ENCODE measurements at regions of chr1 and their contacts with region 1.

Region 1: DNA sequence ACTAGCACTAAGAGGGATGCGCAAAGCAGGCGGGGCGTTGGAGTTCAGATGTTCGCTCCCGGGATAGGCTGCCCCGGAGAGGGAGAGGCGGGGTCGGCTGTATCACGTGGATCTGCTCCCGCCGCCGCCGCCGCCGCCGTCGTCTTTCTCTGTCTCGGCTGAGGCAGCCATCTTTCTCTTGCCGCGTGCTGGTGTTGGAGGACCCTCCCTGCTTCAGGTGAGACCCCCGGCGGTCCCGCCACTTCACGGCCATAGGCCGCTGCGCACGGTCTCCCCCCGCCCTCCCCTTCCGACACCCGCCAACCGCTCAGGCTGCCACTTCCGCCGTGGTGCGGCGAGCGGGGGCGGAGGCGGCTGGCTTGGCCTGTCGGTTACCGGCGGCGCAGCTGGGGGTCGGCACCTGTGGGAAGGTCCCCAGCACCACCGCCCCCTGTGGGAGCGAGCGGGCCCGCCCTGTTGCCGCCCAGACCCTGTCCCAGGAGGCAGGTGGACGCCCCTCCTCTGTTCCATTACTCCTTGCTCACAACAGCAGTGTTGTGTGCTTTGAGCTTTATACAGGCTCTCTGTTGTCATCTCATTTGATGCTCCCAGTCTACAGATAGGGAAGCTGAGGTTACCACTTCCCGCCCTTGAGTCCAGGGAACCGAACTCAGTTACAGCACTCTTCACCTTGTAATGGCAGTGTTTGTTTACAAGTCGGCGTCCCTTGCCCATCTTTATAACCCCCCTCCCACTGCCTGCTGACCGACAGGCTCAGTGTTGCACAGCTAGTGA is at the start of gene BTF3L4:
- DNase-seq: peak; percentile 74 to 94 (median 90)
- ATAC-seq: peak; percentile 97
- H3K4me3 ChIP-seq: peak within 1 kb of the TSS; percentile 92
- H3K4me3 Mint-ChIP-seq: peak within 1 kb of the TSS; percentile 93 to 100 (median 98)
- H3K27ac ChIP-seq: peak within 1 kb of the TSS; percentile 87
- H3K27ac Mint-ChIP-seq: peak within 1 kb of the TSS; percentile 91 to 99 (median 96)
- H3K4me1 ChIP-seq: peaks cover 19 to 24% of the 10 kb centered on the region in 2 donors
- H3K4me1 Mint-ChIP-seq: peaks cover 39 to 79% (median 65%) of the 10 kb centered on the region in 7 donors
- H3K27me3 ChIP-seq: no peaks in the 10 kb centered on the region
- H3K27me3 Mint-ChIP-seq: no peaks in the 10 kb centered on the region
- total RNA-seq, gene BTF3L4: 30.4 to 41.2 (median 35.8) TPM

Region 2: DNA sequence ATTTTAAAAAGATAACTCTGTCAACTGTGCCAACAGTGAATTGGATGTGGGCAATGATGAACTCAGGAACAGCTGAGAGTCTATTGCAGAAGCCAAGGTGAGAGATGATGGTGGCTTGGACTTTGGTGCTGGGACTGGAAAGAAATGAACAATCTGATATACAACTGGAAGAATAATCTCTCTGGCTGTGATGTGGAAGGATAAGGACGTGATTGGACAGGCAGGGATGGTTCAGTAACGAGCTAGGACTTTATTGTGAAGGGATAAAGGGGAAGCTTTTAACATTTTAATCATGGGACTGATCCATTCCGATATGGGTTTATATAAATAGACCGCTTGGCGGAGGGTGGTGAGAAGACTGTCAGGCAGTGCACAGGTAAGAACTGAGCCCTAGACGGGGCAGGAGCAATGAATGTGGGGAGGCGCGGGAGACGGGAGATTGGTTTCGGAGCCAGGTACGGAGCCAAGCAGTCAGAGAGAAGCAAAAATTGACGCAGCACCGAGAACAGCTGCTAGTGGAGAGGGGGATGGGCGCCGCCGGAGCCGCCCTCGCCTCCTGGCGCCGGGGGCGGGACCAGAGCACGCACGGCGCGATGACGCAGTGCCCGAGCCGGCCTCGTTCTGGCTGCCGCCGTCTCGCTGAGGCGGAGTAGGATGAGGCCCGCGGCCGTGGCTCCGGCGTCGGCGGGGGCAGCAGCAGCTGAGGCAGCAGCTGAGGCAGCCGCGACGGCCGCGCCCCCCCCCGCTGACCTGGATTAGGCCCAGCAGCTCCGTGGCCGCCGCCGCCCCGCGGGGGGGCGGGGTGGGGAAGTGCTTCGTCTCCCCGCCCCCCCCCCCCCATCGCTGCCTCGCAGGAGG is 820.4 kb before region 1 on chr1 and contains the start of gene RNF11:
- CTCF ChIA-PET with region 1: no interaction called
- POLR2A ChIA-PET with region 1: no interaction called
- intact Hi-C with region 1: loop called in 1 of 2 experiments (anchors 2 kb)
- DNase-seq: peak; percentile 89 to 97 (median 93)
- ATAC-seq: peak; percentile 98
- H3K4me3 ChIP-seq: peak within 1 kb of the TSS; percentile 68
- H3K4me3 Mint-ChIP-seq: peak within 1 kb of the TSS in 9 of 10 donors; percentile 90 to 99 (median 94)
- H3K27ac ChIP-seq: peak within 1 kb of the TSS; percentile 90
- H3K27ac Mint-ChIP-seq: peak within 1 kb of the TSS; percentile 91 to 100 (median 96)
- H3K4me1 ChIP-seq: peaks cover 18 to 34% of the 10 kb centered on the region in 2 donors
- H3K4me1 Mint-ChIP-seq: peaks cover 15 to 36% (median 30%) of the 10 kb centered on the region in 7 donors
- H3K27me3 ChIP-seq: no peaks in the 10 kb centered on the region
- H3K27me3 Mint-ChIP-seq: peaks cover 0 to 4% (median 0%) of the 10 kb centered on the region in 5 donors
- total RNA-seq, gene RNF11: 23.3 to 64.0 (median 42.9) TPM

Region 3: GRCh38 chr1:52033190-52034049 is 22.9 kb before region 1 on chr1 and contains the start of gene KTI12:
- CTCF ChIA-PET with region 1: no interaction called
- POLR2A ChIA-PET with region 1: interaction called, 43 read pairs
- intact Hi-C with region 1: loop called (anchors 1 kb)
- DNase-seq: peak; percentile 72 to 92 (median 89)
- ATAC-seq: peak; percentile 95
- H3K4me3 ChIP-seq: peak within 1 kb of the TSS; percentile 94
- H3K4me3 Mint-ChIP-seq: peak within 1 kb of the TSS; percentile 91 to 96 (median 93)
- H3K27ac ChIP-seq: peak within 1 kb of the TSS; percentile 73
- H3K27ac Mint-ChIP-seq: peak within 1 kb of the TSS; percentile 92 to 97 (median 96)
- H3K4me1 ChIP-seq: peaks cover 20 to 22% of the 10 kb centered on the region in 2 donors
- H3K4me1 Mint-ChIP-seq: peaks cover 18 to 52% (median 38%) of the 10 kb centered on the region in 7 donors
- H3K27me3 ChIP-seq: no peaks in the 10 kb centered on the region
- H3K27me3 Mint-ChIP-seq: no peaks in the 10 kb centered on the region
- total RNA-seq, gene KTI12: 14.5 to 23.5 (median 16.5) TPM

Region 4: DNA sequence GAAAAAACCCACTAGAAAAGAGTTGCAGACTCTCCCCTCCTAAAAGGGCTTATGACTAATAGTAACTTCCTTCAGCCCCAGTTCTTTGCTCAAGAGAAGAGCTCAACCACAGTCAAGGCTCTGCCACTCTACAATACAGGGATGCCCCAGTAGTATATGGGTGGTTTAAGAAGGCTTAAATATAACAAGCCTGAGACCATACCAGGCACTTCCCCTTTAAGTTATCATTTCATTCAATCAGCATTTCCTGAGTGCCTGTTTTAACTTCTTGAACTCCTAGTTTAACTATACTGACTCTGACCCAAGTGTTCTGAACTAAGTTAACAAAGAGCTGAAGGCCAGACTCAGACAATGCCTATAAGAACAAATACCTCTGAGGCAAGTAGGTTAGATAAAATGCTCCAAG is 367.9 kb after region 1 on chr1:
- CTCF ChIA-PET with region 1: no interaction called
- POLR2A ChIA-PET with region 1: no interaction called
- intact Hi-C with region 1: loop called (anchors 5 kb)
- DNase-seq: peak in 7 of 9 donors; percentile 38 to 71 (median 57)
- ATAC-seq: peak; percentile 93
- H3K4me3 ChIP-seq: peak overlapping the region; percentile 14
- H3K4me3 Mint-ChIP-seq: peak overlapping the region; percentile 49 to 81 (median 74)
- H3K27ac ChIP-seq: peak overlapping the region; percentile 63
- H3K27ac Mint-ChIP-seq: peak overlapping the region; percentile 85 to 96 (median 91)
- H3K4me1 ChIP-seq: peaks cover 35 to 45% of the 10 kb centered on the region in 2 donors
- H3K4me1 Mint-ChIP-seq: peaks cover 33 to 72% (median 51%) of the 10 kb centered on the region in 7 donors
- H3K27me3 ChIP-seq: no peaks in the 10 kb centered on the region
- H3K27me3 Mint-ChIP-seq: no peaks in the 10 kb centered on the region

Region 5: DNA sequence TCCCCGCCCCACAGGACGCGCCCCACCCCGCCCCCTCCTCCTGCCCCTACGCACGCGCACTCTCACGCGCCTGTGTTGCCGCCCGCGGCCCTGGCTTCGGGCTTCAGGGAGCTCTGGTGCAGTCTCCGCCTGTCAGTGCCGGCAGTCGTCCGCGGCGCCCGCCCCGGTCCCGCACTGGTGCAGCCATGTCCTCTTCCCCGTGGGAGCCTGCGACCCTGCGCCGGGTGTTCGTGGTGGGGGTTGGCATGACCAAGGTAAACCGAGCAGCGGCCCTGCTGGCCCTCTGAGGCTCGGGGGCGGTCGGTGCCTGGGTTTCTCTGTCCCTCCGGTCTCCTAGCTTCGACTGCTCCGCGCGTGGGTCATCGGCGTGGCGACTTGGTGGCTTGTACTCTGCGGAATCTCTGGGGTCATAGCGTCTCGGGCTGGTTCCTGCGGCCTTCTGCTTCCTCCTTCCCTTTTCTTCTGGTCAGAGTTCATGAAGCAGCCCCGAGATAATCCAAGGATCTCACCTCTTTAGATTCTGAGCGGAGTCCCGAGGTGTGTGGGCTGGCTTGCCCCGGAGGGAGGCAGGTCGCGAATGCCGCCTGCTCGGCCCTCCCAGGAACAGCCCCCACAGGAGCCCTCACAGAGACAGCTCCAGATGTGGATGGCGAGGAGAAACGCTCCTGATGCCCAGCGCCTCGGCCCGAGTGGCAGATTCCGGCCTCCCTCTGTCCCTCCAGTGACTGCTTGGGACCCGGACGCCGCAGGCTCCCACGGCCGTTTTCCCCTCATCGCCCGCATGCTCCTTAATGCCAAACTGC is 871.1 kb after region 1 on chr1 and contains the start of gene SCP2:
- CTCF ChIA-PET with region 1: no interaction called
- POLR2A ChIA-PET with region 1: no interaction called
- intact Hi-C with region 1: loop called in 1 of 2 experiments (anchors 10 kb)
- DNase-seq: peak; percentile 64 to 83 (median 75)
- ATAC-seq: peak; percentile 96
- H3K4me3 ChIP-seq: peak within 1 kb of the TSS; percentile 87
- H3K4me3 Mint-ChIP-seq: peak within 1 kb of the TSS; percentile 82 to 96 (median 88)
- H3K27ac ChIP-seq: peak within 1 kb of the TSS; percentile 77
- H3K27ac Mint-ChIP-seq: peak within 1 kb of the TSS; percentile 33 to 93 (median 75)
- H3K4me1 ChIP-seq: peaks cover 4 to 7% of the 10 kb centered on the region in 2 donors
- H3K4me1 Mint-ChIP-seq: peaks cover 16 to 41% (median 27%) of the 10 kb centered on the region in 7 donors
- H3K27me3 ChIP-seq: no peaks in the 10 kb centered on the region
- H3K27me3 Mint-ChIP-seq: peaks cover 0 to 6% (median 0%) of the 10 kb centered on the region in 5 donors
- total RNA-seq, gene SCP2: 39.4 to 88.7 (median 48.3) TPM

Region 6: DNA sequence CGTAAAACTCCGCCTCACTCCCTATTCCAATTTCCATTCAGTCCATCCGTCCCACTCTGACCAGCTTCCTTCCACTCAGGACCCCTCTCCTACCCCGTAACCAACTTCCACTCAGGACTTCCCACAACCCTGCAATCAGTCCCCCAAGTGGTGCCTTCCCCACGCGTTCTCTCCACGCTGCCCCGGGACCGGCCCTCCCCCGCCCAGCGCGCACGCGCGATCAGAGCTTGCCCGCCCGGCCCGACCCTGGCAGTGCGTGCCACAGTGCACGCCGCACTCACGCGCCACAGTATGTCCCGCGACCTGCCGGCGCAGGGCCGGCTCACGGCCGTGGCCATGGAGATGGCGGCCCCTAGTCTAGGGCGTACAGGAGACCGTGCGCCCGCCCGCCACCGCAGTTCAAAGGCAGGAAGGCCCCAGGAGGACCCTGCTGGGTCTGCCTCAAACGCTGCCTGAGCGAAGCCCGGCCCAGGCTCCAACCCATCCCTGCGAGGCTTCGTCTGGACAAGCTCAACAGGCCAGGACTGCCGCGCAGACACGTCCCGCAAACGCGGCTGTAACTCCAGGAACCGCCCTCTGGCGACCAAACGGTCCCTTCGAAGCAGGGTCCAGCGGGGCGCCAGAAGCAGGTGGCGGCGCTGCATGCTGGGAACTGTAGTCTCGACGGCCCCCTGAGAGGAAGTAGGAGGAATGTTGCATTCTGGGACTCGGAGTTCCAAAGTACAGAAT is 1781.7 kb after region 1 on chr1 and contains the start of gene NDC1:
- CTCF ChIA-PET with region 1: no interaction called
- POLR2A ChIA-PET with region 1: no interaction called
- intact Hi-C with region 1: loop called in 1 of 2 experiments (anchors 10 kb)
- DNase-seq: peak; percentile 84 to 95 (median 92)
- ATAC-seq: peak; percentile 95
- H3K4me3 ChIP-seq: peak within 1 kb of the TSS; percentile 92
- H3K4me3 Mint-ChIP-seq: peak within 1 kb of the TSS; percentile 96 to 100 (median 99)
- H3K27ac ChIP-seq: peak within 1 kb of the TSS; percentile 95
- H3K27ac Mint-ChIP-seq: peak within 1 kb of the TSS; percentile 96 to 99 (median 98)
- H3K4me1 ChIP-seq: no peaks in the 10 kb centered on the region
- H3K4me1 Mint-ChIP-seq: peaks cover 10 to 41% (median 30%) of the 10 kb centered on the region in 7 donors
- H3K27me3 ChIP-seq: no peaks in the 10 kb centered on the region
- H3K27me3 Mint-ChIP-seq: no peaks in the 10 kb centered on the region
- total RNA-seq, gene NDC1: 6.9 to 20.2 (median 13.2) TPM

Measured in naive thymus-derived CD4-positive, alpha-beta T cell (primary cell).